IMR-90 (cell line): ENCODE measurements at regions of chr15 and their contacts with region 1.

Region 1: GRCh38 chr15:35519541-35520149 is 26.3 kb downstream of the DPH6 start:
- DNase-seq: peak; percentile 64
- ATAC-seq: peak; percentile 78
- H3K4me3 ChIP-seq: no peak overlapping the region
- H3K27ac ChIP-seq: no peak overlapping the region
- H3K4me1 ChIP-seq: peaks cover 6% of the 10 kb centered on the region; the same call in 1 of the 2 replicates
- H3K27me3 ChIP-seq: no peaks in the 10 kb centered on the region
- CTCF ChIP-seq: peak; percentile 79
- POLR2A ChIP-seq: no peak
- RAD21 ChIP-seq: peak; percentile 91

Region 2: DNA sequence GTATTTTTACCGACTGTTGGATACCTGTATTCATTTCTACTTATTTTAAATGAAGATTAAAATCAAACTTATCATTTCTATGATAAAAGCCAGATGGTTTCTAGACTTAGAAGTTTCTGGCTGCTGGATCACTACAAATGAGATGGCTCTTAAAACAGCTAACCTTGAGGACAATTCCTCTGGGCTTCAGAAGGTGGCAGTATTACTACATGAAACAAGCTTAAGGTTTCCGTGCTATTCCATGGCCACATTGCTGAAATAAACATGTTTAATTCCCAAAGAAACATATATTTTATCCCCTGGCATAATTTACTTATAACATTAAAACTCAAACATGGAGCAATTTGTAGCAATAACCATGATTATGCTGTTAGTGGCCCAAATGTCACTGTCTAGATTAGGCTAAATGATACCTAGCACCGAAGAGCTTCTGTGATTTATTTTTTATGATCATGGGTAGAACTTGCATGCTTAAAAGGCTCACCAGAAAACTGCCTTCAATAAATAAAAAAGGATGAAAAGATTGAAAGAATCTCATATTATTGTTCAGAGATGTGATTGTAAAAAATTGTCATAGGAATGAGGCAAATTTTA is 230.5 kb before region 1 on chr15:
- CTCF ChIA-PET with region 1: interaction called, 3 read pairs
- POLR2A ChIA-PET with region 1: no interaction called
- dilution Hi-C with region 1: no loop called
- in situ Hi-C with region 1: no loop called
- intact Hi-C with region 1: loop called (anchors 5 kb)
- DNase-seq: peak; percentile 81
- ATAC-seq: peak; percentile 87
- H3K4me3 ChIP-seq: no peak overlapping the region
- H3K27ac ChIP-seq: no peak overlapping the region
- H3K4me1 ChIP-seq: peaks cover 6% of the 10 kb centered on the region
- H3K27me3 ChIP-seq: no peaks in the 10 kb centered on the region
- CTCF ChIP-seq: peak; percentile 87
- POLR2A ChIP-seq: no peak
- RAD21 ChIP-seq: peak; percentile 94

Region 3: DNA sequence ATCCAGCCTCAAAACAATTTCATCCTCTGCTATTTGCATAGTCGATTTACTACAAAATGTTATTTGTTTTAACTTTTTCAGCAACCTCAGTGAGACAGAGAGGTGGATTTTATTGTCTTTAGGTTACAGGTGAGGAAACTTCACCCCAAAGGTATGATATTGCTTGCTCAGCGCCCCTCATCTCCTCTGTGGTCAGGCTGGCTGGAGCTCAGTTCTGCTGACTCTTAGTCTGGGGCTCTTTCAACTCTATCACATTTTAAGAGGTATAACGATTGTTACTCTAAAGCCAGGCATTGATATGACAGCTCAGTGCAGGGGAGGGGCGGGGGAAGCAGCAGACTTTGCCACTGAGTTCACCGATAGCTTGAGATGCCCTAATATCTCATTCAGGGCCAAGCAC is 129.3 kb after region 1 on chr15:
- CTCF ChIA-PET with region 1: no interaction called
- POLR2A ChIA-PET with region 1: no interaction called
- dilution Hi-C with region 1: no loop called
- in situ Hi-C with region 1: no loop called
- intact Hi-C with region 1: no loop called
- DNase-seq: no peak
- ATAC-seq: no peak
- H3K4me3 ChIP-seq: no peak overlapping the region
- H3K27ac ChIP-seq: no peak overlapping the region
- H3K4me1 ChIP-seq: no peaks in the 10 kb centered on the region
- H3K27me3 ChIP-seq: peaks cover 2% of the 10 kb centered on the region; the same call in 1 of the 2 replicates
- CTCF ChIP-seq: no peak
- POLR2A ChIP-seq: no peak
- RAD21 ChIP-seq: no peak

Region 4: GRCh38 chr15:35907511-35907910 is 387.9 kb after region 1 on chr15:
- CTCF ChIA-PET with region 1: no interaction called
- POLR2A ChIA-PET with region 1: no interaction called
- dilution Hi-C with region 1: no loop called
- in situ Hi-C with region 1: no loop called
- intact Hi-C with region 1: loop called (anchors 10 kb)
- DNase-seq: peak; percentile 23
- ATAC-seq: no peak
- H3K4me3 ChIP-seq: no peak overlapping the region
- H3K27ac ChIP-seq: no peak overlapping the region
- H3K4me1 ChIP-seq: no peaks in the 10 kb centered on the region
- H3K27me3 ChIP-seq: no peaks in the 10 kb centered on the region
- CTCF ChIP-seq: no peak
- POLR2A ChIP-seq: no peak
- RAD21 ChIP-seq: no peak

Region 5: GRCh38 chr15:35944945-35945585 is 425.4 kb after region 1 on chr15:
- CTCF ChIA-PET with region 1: no interaction called
- POLR2A ChIA-PET with region 1: no interaction called
- dilution Hi-C with region 1: no loop called
- in situ Hi-C with region 1: no loop called
- intact Hi-C with region 1: no loop called
- DNase-seq: no peak
- ATAC-seq: no peak
- H3K4me3 ChIP-seq: no peak overlapping the region
- H3K27ac ChIP-seq: no peak overlapping the region
- H3K4me1 ChIP-seq: no peaks in the 10 kb centered on the region
- H3K27me3 ChIP-seq: no peaks in the 10 kb centered on the region
- CTCF ChIP-seq: no peak
- POLR2A ChIP-seq: no peak
- RAD21 ChIP-seq: no peak

Region 6: GRCh38 chr15:36230741-36231140 is 711.1 kb after region 1 on chr15:
- CTCF ChIA-PET with region 1: no interaction called
- POLR2A ChIA-PET with region 1: no interaction called
- dilution Hi-C with region 1: no loop called
- in situ Hi-C with region 1: no loop called
- intact Hi-C with region 1: loop called (anchors 10 kb)
- DNase-seq: peak; percentile 84
- ATAC-seq: peak; percentile 89
- H3K4me3 ChIP-seq: no peak overlapping the region
- H3K27ac ChIP-seq: no peak overlapping the region
- H3K4me1 ChIP-seq: peaks cover 3% of the 10 kb centered on the region
- H3K27me3 ChIP-seq: no peaks in the 10 kb centered on the region
- CTCF ChIP-seq: no peak
- POLR2A ChIP-seq: no peak
- RAD21 ChIP-seq: no peak

Region 7: DNA sequence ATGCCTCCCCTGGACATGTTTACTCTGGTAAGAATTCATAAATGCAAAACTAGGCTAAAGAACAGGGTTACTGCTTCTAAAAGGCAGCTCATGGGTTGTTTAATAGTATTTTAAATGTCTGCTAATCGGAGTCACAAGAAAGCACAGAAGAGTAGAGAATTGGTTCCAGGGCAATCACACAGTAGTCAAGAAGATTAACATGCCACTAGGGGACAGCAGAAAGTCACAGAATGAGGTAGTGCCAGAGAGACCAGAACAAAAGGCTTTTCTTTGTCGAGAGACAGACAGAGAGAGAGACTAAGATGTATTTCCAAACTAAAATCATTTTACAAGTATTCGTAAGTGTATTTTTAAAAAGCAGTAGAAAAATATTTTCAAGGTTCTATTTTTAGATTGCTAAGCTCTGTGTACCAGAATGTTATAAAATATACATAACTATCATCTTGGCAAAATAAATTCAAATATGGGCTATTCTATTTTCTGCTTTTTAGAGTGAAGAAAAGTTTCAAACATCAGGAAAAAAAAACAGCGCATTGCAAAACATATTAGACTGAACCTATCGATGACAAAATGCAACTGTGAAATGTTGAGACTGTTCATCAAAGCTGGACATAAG is 981.5 kb after region 1 on chr15:
- CTCF ChIA-PET with region 1: interaction called, 4 read pairs
- POLR2A ChIA-PET with region 1: no interaction called
- dilution Hi-C with region 1: no loop called
- in situ Hi-C with region 1: no loop called
- intact Hi-C with region 1: loop called (anchors 5 kb)
- DNase-seq: peak; percentile 79
- ATAC-seq: peak; percentile 89
- H3K4me3 ChIP-seq: no peak overlapping the region
- H3K27ac ChIP-seq: no peak overlapping the region
- H3K4me1 ChIP-seq: peaks cover 5% of the 10 kb centered on the region
- H3K27me3 ChIP-seq: no peaks in the 10 kb centered on the region
- CTCF ChIP-seq: peak; percentile 79
- POLR2A ChIP-seq: peak; percentile 28; the same call in 1 of the 2 replicates
- RAD21 ChIP-seq: peak; percentile 90

Region 8: GRCh38 chr15:36883713-36884517 is 1364.3 kb after region 1 on chr15:
- CTCF ChIA-PET with region 1: no interaction called
- POLR2A ChIA-PET with region 1: no interaction called
- dilution Hi-C with region 1: no loop called
- in situ Hi-C with region 1: no loop called
- intact Hi-C with region 1: loop called (anchors 5 kb)
- DNase-seq: peak; percentile 86
- ATAC-seq: peak; percentile 90
- H3K4me3 ChIP-seq: peak overlapping the region; percentile 35; the same call in 1 of the 2 replicates
- H3K27ac ChIP-seq: no peak overlapping the region
- H3K4me1 ChIP-seq: peaks cover 3% of the 10 kb centered on the region; the same call in 1 of the 2 replicates
- H3K27me3 ChIP-seq: peaks cover 24% of the 10 kb centered on the region
- CTCF ChIP-seq: peak; percentile 88
- POLR2A ChIP-seq: no peak
- RAD21 ChIP-seq: peak; percentile 91

Region 9: GRCh38 chr15:37134699-37135131 is 1615.1 kb after region 1 on chr15:
- CTCF ChIA-PET with region 1: no interaction called
- POLR2A ChIA-PET with region 1: no interaction called
- dilution Hi-C with region 1: no loop called
- in situ Hi-C with region 1: loop called (anchors 10 kb)
- intact Hi-C with region 1: loop called (anchors 2 kb)
- DNase-seq: peak; percentile 58
- ATAC-seq: peak; percentile 68
- H3K4me3 ChIP-seq: no peak overlapping the region
- H3K27ac ChIP-seq: no peak overlapping the region
- H3K4me1 ChIP-seq: peaks cover 1% of the 10 kb centered on the region; the same call in 1 of the 2 replicates
- H3K27me3 ChIP-seq: no peaks in the 10 kb centered on the region
- CTCF ChIP-seq: peak; percentile 80
- POLR2A ChIP-seq: no peak
- RAD21 ChIP-seq: peak; percentile 53